ENCODE measurements at regions of chr7 and their contacts with region 1.

Region 1: DNA sequence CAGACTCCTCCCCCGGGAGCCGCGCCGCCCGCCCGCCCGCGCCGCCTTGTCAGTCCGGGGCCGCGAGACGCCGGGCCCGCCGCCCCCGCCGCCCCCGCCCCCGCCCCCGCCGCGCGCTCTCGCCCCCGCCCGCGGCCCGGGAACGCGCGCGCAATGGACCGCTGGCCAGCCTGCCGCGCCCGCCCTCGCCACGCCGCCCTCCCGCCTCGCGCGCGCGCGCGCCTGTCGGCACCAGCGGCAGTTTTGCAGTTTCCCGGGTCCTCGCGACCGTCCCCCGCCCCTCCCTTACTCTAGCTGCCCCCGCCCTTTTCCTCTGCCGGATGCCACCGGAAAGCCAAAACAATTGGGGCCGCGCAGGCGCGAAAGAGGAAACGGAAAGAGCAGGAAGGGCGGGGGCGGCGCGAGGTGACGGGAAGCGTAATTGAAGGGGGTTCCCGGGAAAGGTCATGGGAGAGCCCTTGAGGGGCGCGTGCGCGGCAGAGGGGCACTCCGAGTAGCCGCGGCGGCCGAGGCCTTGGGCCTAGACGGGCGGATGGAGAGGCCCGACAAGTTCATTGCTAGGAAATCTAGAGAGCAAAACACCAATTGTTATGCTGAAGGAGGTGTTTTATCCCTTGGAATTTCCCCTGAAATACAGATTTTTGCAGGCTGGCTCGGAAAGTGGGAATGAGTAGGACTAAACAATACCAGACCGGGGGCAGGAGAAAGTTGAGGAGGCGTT is 400 bp upstream of the KBTBD2 start:
- DNase-seq: peak in 1 of 2 donors; percentile 96
- H3K4me3 ChIP-seq: peak overlapping the region; percentile 88 to 95
- H3K27ac ChIP-seq: peak overlapping the region; percentile 99
- H3K4me1 ChIP-seq: peaks cover 39% of the 10 kb centered on the region
- H3K27me3 ChIP-seq: no peaks in the 10 kb centered on the region
- CTCF ChIP-seq: no peak
- POLR2A ChIP-seq: peak in 1 of 2 donors; percentile 54

Region 2: GRCh38 chr7:32495298-32496176 is 396.4 kb before region 1 on chr7 and contains the start of gene AVL9:
- intact Hi-C with region 1: loop called (anchors 5 kb)
- DNase-seq: peak; percentile 97 to 99
- H3K4me3 ChIP-seq: peak within 1 kb of the TSS; percentile 76 to 94
- H3K27ac ChIP-seq: peak within 1 kb of the TSS; percentile 95
- H3K4me1 ChIP-seq: peaks cover 35% of the 10 kb centered on the region
- H3K27me3 ChIP-seq: no peaks in the 10 kb centered on the region
- CTCF ChIP-seq: peak in 1 of 3 experiments; percentile 13
- POLR2A ChIP-seq: peak in 1 of 2 donors; percentile 81
- total RNA-seq, gene AVL9: 25.5 TPM

Region 3: DNA sequence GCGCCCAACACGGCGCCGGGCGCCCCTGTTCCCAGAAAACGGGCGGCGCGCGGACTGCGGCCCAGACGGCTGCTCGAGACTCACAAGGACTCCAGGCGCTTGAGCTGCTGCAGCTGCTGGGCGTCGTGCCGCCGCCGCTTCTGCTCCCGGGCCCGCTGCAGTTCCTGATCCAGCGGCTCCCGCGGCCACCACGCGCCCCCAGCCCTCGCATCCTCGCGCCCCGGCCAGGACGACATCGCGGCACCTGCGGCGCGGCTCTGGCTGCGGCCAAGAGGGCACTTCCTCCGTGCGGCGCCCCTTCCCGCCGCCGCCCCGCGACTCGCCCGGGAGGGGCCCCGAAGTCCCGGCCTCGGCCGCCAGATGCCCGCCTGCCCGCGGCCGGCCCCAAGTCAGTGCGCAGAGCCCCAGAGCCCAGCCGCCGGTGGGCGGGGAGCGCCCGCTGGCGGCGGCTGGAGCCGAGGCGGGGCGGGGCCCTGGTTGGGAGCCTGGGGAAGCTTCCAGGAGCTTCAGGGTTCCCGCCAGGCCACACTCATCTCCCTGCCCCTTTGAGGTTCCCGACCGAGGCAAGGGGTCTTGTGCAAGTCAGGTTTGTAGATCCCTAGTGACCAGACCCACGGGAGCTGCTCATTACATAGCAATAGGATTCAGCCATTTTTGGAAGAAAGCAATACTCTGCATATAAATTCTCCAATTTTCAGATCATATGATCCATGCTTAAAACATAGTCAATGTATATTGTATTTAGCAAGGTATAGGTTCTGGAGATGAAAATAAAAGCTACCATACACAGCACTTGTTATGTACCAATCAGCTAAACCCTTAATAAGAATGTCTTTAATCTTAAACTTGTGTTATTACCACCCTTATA is 51.1 kb after region 1 on chr7:
- intact Hi-C with region 1: loop called (anchors 1 kb)
- DNase-seq: no peak
- H3K4me3 ChIP-seq: peak overlapping the region; percentile 82 to 90
- H3K27ac ChIP-seq: peak overlapping the region; percentile 99
- H3K4me1 ChIP-seq: peaks cover 41% of the 10 kb centered on the region
- H3K27me3 ChIP-seq: no peaks in the 10 kb centered on the region
- CTCF ChIP-seq: peak in 2 of 3 experiments; percentile 16 to 51
- POLR2A ChIP-seq: peak in 1 of 2 donors; percentile 37